Panc1 (cell line): ENCODE measurements at regions of chr15 and their contacts with region 1.

Region 1: DNA sequence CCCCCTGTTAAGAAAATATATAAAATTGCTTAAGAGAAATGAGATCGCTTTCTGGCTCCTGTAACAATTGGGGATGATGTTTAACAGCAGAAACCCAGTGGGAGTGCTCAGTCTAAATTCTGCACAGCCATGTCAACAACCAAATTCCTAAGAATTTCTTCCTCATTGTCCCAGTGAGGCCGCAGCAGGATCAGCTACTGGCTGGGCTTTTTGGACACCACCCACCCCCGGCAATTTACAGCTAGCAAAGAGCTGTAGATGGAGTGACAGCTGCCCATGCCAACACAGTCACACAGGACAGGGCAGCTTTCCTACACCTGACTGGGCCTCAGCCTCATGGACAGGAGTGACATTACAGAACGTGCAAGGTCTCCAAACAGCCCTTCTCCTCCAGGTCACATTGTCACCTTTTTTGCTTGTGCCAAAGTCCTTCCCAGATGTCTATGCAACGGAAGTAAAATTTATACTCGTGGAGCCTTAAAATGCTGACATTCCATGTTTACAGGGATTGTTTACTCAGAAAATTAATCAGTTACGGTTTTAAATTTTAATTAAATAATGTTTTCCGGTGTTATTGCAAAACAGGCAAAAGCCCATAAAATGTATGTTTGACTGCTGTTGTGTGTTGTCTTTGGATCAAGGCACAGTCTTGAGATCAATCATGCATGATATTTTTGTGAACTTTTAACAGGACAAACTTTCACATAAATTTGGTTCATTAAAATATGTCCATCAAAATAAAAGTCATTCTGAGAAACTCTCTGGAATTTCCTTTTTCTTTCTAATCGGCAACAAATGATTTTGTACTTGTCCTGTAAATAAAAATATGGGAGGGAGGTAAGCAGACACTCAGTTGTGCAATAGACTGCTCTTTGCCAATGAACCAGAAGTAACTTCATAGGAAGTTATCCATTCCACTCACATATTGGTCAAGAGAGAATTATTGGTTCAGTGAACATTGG is 943.2 kb downstream of the MCTP2 start:
- DNase-seq: no peak
- ATAC-seq: no peak
- H3K4me3 ChIP-seq: no peak overlapping the region
- H3K27ac ChIP-seq: no peak overlapping the region
- H3K4me1 ChIP-seq: no peaks in the 10 kb centered on the region
- H3K27me3 ChIP-seq: no peaks in the 10 kb centered on the region
- CTCF ChIP-seq: no peak

Region 2: GRCh38 chr15:95041299-95041698 is 133.3 kb before region 1 on chr15:
- CTCF ChIA-PET with region 1: no interaction called
- POLR2A ChIA-PET with region 1: no interaction called
- in situ Hi-C with region 1: no loop called
- intact Hi-C with region 1: no loop called
- DNase-seq: no peak
- ATAC-seq: no peak
- H3K4me3 ChIP-seq: no peak overlapping the region
- H3K27ac ChIP-seq: no peak overlapping the region
- H3K4me1 ChIP-seq: no peaks in the 10 kb centered on the region
- H3K27me3 ChIP-seq: no peaks in the 10 kb centered on the region
- CTCF ChIP-seq: no peak

Region 3: DNA sequence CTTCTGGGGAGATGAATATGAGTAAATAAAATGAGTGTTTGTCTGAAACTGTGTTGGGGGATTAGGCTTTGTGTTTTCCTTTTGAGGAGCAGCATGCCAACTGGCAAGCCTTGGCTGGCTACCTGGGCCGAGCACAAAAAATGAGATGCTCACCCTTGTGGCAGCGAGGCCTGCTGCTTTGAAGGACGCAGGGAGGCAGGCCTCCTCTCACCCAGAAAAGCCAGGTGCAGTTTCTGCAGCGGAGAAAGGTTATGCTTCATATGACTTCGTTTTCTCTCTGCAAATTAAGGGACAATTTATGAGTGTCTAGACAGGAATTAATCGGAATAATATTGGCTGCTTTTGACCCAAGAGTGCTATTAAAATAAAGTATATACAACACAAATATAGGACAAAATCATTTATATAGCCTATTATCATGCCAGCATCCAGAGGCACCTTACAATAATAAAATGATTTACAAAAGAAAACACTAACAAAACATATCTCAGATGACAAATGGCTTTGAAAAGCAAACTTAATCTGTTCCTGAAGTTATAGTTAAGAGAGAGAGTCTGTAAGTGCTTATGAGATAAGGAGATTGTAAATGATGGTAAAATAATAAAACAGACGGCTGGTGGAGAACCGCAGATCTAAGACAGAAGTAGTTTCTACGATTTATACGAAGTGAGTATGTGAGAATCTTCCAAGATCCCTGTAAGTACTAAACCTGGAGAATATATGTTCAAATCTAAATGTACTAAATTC is 473.1 kb after region 1 on chr15:
- CTCF ChIA-PET with region 1: interaction called, 13 read pairs
- POLR2A ChIA-PET with region 1: no interaction called
- in situ Hi-C with region 1: no loop called
- intact Hi-C with region 1: no loop called
- DNase-seq: no peak
- ATAC-seq: no peak
- H3K4me3 ChIP-seq: no peak overlapping the region
- H3K27ac ChIP-seq: no peak overlapping the region
- H3K4me1 ChIP-seq: no peaks in the 10 kb centered on the region
- H3K27me3 ChIP-seq: no peaks in the 10 kb centered on the region
- CTCF ChIP-seq: no peak

Region 4: DNA sequence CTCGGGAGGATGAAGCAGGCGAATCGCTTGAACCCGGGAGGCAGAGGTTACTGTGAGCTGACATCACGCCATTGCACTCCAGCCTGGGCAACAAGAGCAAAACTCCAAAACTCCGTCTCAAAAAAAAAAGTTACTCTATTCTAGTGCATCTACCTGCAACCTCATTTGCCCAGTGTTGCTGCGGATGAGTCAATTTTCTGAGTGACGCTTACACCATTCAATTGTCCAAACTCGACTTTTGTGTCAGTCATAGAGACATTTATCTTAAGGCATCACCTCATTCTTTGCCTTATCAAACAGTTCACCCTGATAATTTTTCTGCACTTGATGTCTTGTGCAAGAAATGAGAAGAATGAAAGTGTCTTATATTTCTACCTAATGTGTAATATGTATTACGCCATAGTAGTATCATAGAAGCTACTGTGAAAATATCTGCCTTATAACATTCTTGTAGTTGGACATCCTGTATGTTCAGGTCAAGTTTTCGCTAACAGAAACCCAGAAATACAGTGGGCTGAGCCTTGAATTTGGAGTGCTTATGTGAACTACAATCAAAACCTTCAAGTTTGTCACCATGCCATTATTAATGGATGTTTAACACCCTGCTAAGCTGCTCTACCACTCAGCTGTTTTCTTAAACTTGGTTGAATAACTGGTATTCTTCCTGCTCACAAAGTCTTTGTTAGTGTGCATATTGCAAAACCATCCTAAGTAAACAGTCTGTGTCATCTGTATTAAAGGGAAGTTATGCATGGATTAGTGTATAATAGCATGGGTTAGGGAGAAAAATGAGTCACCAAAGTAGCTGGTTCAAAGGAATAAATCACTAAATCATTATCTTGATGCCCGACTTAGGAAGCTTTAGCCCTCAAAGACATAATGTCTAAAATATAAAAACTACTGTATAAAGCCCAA is 625.0 kb after region 1 on chr15:
- CTCF ChIA-PET with region 1: no interaction called
- POLR2A ChIA-PET with region 1: interaction called, 16 read pairs
- in situ Hi-C with region 1: no loop called
- intact Hi-C with region 1: no loop called
- DNase-seq: peak; percentile 38
- ATAC-seq: no peak
- H3K4me3 ChIP-seq: no peak overlapping the region
- H3K27ac ChIP-seq: no peak overlapping the region
- H3K4me1 ChIP-seq: no peaks in the 10 kb centered on the region
- H3K27me3 ChIP-seq: no peaks in the 10 kb centered on the region
- CTCF ChIP-seq: no peak